ENCODE measurements at regions of chr19 and their contacts with region 1.

Region 1: GRCh38 chr19:6021878-6022569 is 44.1 kb upstream of the RANBP3 start:
- DNase-seq: peak in 9 of 10 donors; percentile 52 to 95 (median 78)

Region 2: DNA sequence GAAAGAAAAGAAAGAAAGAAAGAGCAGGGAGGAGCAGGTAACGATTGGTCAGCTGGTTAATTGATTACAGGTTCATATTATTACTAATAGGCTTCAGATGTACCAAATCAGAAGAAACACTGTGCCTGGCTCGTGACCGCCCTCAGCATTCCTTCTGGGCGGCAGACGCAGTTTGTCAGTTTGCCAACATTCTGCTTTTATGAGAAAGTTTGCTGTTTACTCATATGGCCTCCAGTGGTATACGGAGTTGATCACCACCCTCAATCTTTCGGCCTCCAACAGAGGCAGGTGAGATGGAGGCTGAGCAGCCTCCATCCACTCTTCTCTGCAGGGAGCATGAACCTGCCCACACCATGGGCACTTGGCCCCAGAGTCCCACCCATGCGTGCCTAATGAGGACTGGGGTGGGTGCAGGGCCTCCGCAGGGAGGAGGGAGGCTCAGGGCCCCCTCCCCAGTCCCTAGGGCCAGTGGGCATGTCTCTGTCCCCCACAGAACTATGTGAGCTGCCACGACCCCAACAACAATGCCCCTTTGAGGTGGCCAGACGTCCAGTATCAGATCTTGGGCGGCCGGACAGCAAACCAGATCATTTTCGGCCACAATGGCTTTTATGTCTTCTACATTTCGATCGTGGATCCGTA is 246.2 kb before region 1 on chr19:
- intact Hi-C with region 1: loop called (anchors 10 kb)
- DNase-seq: peak in 1 of 10 donors; percentile 52

Region 3: GRCh38 chr19:5947435-5947834 is 74.6 kb before region 1 on chr19:
- intact Hi-C with region 1: no loop called
- DNase-seq: peak; percentile 42 to 95 (median 70)

Region 4: GRCh38 chr19:5967994-5968430 is 54.0 kb before region 1 on chr19:
- intact Hi-C with region 1: loop called (anchors 5 kb)
- DNase-seq: peak in 9 of 10 donors; percentile 46 to 93 (median 78)

Region 5: GRCh38 chr19:5988517-5989387 is 33.3 kb before region 1 on chr19:
- intact Hi-C with region 1: loop called (anchors 2 kb)
- DNase-seq: peak in 1 of 10 donors; percentile 4

Measured in posterior cingulate gyrus (tissue), 11 donors.